ENCODE measurements at regions of chr13 and their contacts with region 1.

Region 1: DNA sequence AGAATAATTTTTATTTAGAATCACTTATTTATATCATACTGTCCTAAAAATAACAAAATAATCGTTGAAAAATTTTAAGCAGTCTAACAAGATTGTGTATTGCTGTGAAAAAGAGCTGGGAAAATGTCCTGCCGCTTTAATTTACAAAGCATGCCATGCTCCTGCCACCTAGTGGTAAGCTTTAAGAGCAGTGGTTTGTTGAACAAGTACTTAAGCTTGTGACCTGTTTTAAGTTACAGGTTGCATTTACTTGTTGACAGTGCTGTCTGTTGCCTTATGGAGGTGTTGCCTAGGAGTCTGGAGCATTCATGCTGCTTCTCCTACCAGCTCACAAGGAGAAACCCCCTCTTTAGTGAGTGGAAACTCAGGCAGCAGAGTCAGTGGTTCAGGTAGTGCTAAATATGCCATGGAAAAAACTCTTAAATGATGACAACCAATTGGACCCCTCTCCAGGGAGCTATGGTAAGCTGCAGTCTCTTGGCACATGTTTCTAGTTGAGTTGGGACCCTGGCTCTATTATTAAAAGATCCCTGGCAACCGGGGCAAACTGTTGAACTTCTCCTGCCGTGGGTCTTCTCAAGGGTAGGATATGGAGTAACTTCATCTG is 68.4 kb downstream of the SPATA13 start:
- DNase-seq: peak; percentile 46
- CTCF ChIP-seq: peak; percentile 85

Region 2: GRCh38 chr13:23673354-23673753 is 555.6 kb before region 1 on chr13:
- CTCF ChIA-PET with region 1: no interaction called
- POLR2A ChIA-PET with region 1: no interaction called
- DNase-seq: no peak
- CTCF ChIP-seq: no peak

Region 3: DNA sequence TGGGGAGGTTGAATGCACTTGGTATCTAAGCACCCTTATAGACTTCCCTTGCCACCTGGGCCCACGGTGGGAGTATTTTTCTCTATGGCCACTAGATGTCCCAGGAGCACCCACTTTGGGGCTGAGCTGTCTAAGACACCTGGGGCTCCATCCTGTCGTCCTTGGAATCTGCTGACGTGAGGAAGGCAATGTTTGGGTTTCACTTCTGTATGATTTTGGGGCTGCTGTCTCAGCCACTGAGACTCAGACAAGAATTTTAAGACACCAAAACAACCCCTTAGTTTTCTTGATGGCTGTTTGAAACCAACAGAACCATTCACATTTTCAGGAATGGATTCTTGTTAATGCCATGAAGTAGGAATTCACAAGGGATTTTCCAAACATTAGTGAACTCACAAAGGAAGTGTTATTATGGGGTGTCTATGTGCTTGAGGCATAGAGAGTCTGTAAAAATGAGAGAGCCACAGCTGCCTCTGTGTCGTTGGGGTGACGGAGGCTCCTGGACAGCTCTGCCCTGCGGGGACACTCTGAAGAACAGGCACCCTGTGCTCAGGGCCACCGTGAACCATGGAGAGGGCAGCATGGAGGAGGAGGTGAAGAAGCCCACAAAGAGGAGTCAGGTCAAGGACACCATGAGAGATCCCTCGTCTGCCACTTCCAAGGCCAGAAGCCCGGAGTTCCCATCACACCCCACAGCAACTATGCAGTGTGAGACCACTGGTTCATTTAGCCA is 175.3 kb before region 1 on chr13:
- CTCF ChIA-PET with region 1: interaction called, 53 read pairs
- POLR2A ChIA-PET with region 1: no interaction called
- DNase-seq: peak; percentile 78
- CTCF ChIP-seq: peak; percentile 74

Region 4: DNA sequence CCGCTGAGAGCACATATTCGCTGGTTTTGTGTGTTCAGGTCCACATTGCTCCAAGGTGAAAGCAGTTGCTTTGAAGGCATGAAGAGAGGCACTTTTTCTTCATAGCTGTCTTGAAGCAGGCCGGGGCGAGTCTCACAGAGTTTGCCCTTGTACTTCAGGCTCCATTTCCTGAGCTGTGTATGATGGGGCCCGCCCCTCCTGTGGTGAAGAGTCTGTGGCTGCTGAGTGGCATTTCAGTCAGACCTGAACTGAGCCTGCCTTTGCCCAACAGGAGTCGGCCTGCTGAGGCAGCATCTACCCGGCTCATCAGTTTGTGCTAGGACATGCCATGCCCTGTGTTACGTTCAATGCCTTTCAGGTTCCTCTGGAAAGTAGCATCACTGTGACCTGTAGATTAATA is 36.0 kb after region 1 on chr13:
- CTCF ChIA-PET with region 1: interaction called, 18 read pairs
- POLR2A ChIA-PET with region 1: no interaction called
- DNase-seq: no peak
- CTCF ChIP-seq: no peak

Region 5: GRCh38 chr13:24270639-24271141 is 41.7 kb after region 1 on chr13:
- CTCF ChIA-PET with region 1: interaction called, 18 read pairs
- POLR2A ChIA-PET with region 1: no interaction called
- DNase-seq: peak; percentile 66
- CTCF ChIP-seq: no peak

Region 6: GRCh38 chr13:24540236-24541126 is 311.5 kb after region 1 on chr13:
- CTCF ChIA-PET with region 1: no interaction called
- POLR2A ChIA-PET with region 1: no interaction called
- DNase-seq: peak; percentile 18
- CTCF ChIP-seq: peak; percentile 20

Measured in GM10248 (cell line).